ENCODE measurements at regions of chr15 and their contacts with region 1.

Region 1: DNA sequence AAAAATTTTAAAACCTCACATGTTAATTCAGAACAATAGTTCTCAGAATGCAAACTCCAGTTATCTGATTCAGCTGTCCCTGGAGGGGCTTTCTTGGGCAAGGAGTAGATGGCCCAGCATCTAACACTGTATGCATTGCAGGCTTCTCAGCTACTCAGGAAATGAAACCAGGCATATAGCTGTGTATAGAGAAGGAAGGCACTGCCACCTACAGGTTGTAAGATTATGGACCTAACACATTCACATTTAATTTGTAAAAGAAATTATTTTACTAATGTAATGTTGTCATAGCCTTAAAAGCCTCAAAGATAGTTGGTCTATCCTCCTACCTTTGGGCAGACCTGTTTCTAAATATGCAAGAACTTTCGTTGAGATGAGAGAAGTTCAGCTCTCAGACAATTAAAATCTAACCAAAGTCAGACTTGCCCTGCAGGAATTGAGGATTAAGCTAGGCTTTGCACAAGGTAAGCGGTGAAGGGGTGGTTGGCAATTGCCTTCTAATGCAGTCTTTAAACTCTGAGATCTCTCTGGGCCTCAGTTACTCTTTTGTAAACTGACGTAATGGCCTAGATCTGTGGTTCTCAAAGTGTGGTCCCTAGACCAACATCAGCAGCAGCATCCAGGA is 132.8 kb upstream of the SLC24A5 start:
- DNase-seq: peak; percentile 48
- CTCF ChIP-seq: peak; percentile 61

Region 2: GRCh38 chr15:47473106-47473725 is 514.8 kb before region 1 on chr15:
- CTCF ChIA-PET with region 1: interaction called, 10 read pairs
- POLR2A ChIA-PET with region 1: no interaction called
- DNase-seq: no peak
- CTCF ChIP-seq: no peak

Region 3: GRCh38 chr15:47908950-47909670 is 78.9 kb before region 1 on chr15:
- CTCF ChIA-PET with region 1: interaction called, 12 read pairs
- POLR2A ChIA-PET with region 1: no interaction called
- DNase-seq: no peak
- CTCF ChIP-seq: no peak

Region 4: GRCh38 chr15:47975427-47975826 is 12.6 kb before region 1 on chr15:
- CTCF ChIA-PET with region 1: interaction called, 29 read pairs
- POLR2A ChIA-PET with region 1: no interaction called
- DNase-seq: no peak
- CTCF ChIP-seq: no peak

Region 5: GRCh38 chr15:48073881-48074280 is 85.9 kb after region 1 on chr15:
- CTCF ChIA-PET with region 1: no interaction called
- POLR2A ChIA-PET with region 1: no interaction called
- DNase-seq: no peak
- CTCF ChIP-seq: no peak

Region 6: GRCh38 chr15:48084759-48085590 is 97.0 kb after region 1 on chr15:
- CTCF ChIA-PET with region 1: interaction called, 24 read pairs
- POLR2A ChIA-PET with region 1: no interaction called
- DNase-seq: peak; percentile 24
- CTCF ChIP-seq: peak; percentile 52